ENCODE measurements at regions of chr1 and their contacts with region 1.

Region 1: GRCh38 chr1:24847995-24848881 is 81.8 kb downstream of the RUNX3 start:
- DNase-seq: peak; percentile 96
- H3K4me3 ChIP-seq: peak overlapping the region; percentile 32 to 60 (median 53)
- H3K27ac ChIP-seq: peak overlapping the region; percentile 64 to 71 (median 68)
- H3K4me1 ChIP-seq: peaks cover 0 to 24% (median 10%) of the 10 kb centered on the region in 4 donors
- H3K27me3 ChIP-seq: no peaks in the 10 kb centered on the region
- CTCF ChIP-seq: peak; percentile 80 to 92 (median 91)
- EP300 ChIP-seq: no peak
- POLR2A ChIP-seq: no peak

Region 2: DNA sequence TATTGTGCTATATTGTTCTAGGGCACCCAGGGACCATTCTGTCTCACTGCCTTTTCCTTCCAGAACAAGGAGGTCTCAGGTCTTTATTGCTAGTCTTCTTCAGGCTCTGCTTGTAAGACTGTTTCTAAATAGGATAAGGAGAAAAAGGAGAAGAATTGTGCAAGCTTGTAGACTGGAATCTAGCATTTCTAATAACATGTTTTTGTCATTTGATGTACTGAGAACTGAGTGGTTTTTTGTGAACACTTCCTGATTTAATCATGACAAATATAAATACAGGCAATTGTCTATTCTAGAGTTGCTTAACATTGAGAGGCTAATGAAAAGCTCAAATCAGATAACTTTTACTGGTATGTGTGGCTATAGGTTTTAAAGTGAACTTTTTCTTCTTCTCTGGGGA is 25.4 kb before region 1 on chr1:
- intact Hi-C with region 1: no loop called
- DNase-seq: no peak
- H3K4me3 ChIP-seq: no peak overlapping the region
- H3K27ac ChIP-seq: no peak overlapping the region
- H3K4me1 ChIP-seq: peaks cover 0 to 29% (median 19%) of the 10 kb centered on the region in 4 donors
- H3K27me3 ChIP-seq: no peaks in the 10 kb centered on the region
- CTCF ChIP-seq: no peak
- EP300 ChIP-seq: no peak
- POLR2A ChIP-seq: no peak

Region 3: DNA sequence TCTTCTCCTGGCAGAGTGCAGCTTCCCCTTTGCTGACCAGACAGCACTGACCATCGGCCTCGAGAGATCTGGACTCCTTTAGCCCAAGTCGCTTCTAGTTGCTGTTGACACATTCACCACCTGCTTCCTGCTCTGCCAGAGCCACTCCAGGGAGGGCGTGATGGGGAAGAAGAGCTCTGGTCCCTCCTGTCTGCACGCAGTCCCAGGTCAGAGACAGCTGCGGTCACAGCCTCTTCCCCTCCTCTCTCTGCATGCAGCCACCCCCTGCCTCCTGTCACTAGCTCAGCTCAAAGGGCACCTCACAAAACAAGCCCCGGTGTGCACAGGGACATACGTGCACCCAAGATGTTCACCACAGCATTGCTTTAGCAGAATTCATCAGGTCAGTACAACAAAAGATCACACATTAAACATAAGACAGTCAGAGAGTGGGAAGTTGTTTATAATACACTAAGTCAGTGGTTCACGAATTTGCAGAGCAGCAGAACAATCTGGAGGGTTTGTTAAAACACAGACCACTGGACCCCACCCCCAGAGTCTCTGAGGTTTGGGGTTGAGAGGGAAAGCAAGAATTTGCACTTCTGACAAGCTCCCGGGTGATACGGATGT is 251.2 kb after region 1 on chr1:
- intact Hi-C with region 1: loop called (anchors 2 kb)
- DNase-seq: no peak
- H3K4me3 ChIP-seq: no peak overlapping the region
- H3K27ac ChIP-seq: no peak overlapping the region
- H3K4me1 ChIP-seq: no peaks in the 10 kb centered on the region
- H3K27me3 ChIP-seq: peaks cover 0 to 3% (median 0%) of the 10 kb centered on the region in 3 donors
- CTCF ChIP-seq: no peak
- EP300 ChIP-seq: no peak
- POLR2A ChIP-seq: no peak

Region 4: DNA sequence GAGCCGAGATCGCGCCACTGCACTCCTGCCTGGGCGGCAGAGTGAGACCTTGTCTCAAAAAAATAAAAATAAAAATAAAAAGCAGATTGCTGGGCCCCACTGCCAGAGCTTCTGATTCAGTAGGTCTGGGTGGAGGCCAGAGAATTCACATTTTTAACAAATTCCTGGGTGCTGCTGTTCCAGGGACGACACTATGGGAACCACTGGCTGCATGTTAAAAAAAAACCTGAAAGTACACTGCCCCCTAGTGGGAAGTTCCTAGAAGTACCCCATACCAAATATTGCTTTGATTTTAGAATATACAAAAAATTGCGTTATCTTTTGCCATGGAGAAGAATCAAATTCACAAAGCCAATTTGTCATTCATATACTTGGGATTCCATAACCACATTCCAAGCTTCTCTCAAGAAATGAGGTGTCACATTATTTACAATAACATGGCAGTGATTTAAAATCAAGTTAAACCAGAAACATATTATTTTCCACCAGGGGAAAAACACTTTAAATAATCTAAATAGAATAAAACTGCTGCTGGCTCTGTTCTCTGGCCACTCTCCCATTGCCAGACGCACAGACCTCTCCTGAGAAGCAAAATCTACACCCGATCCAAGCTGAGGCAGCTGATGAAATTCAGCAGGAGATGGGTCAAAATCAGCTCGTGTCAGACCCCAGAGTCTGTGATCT is 356.7 kb after region 1 on chr1:
- intact Hi-C with region 1: loop called (anchors 2 kb)
- DNase-seq: peak; percentile 41
- H3K4me3 ChIP-seq: no peak overlapping the region
- H3K27ac ChIP-seq: no peak overlapping the region
- H3K4me1 ChIP-seq: peaks cover 0 to 5% (median 0%) of the 10 kb centered on the region in 4 donors
- H3K27me3 ChIP-seq: no peaks in the 10 kb centered on the region
- CTCF ChIP-seq: peak; percentile 14 to 87 (median 50)
- EP300 ChIP-seq: no peak
- POLR2A ChIP-seq: no peak